Heart right ventricle (tissue), 16 donors: ENCODE measurements at regions of chr5 and their contacts with region 1.

Region 1: GRCh38 chr5:150560401-150561193 is 52.7 kb downstream of the NDST1 start:
- DNase-seq: peak in 1 of 2 donors; percentile 91
- ATAC-seq: peak; percentile 78 to 91 (median 87)
- H3K4me3 ChIP-seq: no peak overlapping the region
- H3K27ac ChIP-seq: peak overlapping the region in 1 of 10 donors; percentile 0
- H3K4me1 ChIP-seq: peaks cover 0 to 29% (median 8%) of the 10 kb centered on the region in 9 donors
- H3K27me3 ChIP-seq: no peaks in the 10 kb centered on the region
- CTCF ChIP-seq: peak; percentile 88 to 97 (median 95)

Region 2: GRCh38 chr5:150710165-150710564 is 149.6 kb after region 1 on chr5:
- intact Hi-C with region 1: loop called in 4 of 10 experiments (anchors 2 to 5 kb)
- DNase-seq: no peak
- ATAC-seq: no peak
- H3K4me3 ChIP-seq: no peak overlapping the region
- H3K27ac ChIP-seq: no peak overlapping the region
- H3K4me1 ChIP-seq: peaks cover 0 to 9% (median 0%) of the 10 kb centered on the region in 9 donors
- H3K27me3 ChIP-seq: no peaks in the 10 kb centered on the region
- CTCF ChIP-seq: peak; percentile 9 to 55 (median 40)